T-cell (primary cell): ENCODE measurements at regions of chr1 and their contacts with region 1.

Region 1: DNA sequence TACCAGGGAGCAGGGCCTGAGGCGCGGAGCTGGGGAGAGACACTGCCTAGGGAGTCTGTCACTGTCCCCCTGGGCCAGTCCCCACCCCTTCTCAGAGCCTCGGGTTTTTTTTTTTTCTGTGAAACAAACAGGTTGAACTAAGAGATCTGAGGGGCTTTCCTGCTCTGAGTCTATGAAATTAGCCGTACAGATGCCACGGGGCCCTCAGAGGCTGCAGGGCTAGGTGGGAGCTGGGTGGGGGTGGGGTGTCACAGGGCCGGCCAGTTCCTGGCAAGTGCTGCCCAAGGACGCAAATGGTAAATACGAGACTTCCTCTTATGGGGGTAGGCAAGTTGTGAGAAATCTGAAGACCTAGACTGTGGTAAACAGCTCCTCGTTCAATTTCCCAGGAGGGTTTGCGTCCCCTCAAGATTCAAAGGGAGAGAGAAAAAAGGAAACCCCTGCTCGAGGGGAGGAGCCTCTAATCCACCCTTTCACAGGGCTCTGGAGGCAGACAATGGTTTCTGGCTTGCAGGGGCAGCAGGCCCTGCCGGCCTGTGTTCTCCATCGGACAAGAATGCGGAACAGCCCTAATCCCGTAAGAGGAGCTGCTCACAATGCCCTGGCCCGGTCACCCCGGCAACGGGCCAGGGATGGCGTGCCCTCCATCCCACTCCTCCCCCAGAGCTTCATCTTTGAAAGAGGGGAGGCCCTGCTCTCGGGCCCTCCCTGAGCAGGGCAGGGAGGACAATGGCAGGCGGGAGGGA is 7.8 kb downstream of the NUAK2 start:
- DNase-seq: peak in 34 of 35 experiments; percentile 7 to 75 (median 40)
- ATAC-seq: peak; percentile 62 to 87 (median 68)
- H3K4me3 ChIP-seq: peak overlapping the region; percentile 44 to 45
- H3K4me3 Mint-ChIP-seq: peak overlapping the region; percentile 82 to 95 (median 84)
- H3K27ac ChIP-seq: peak overlapping the region; percentile 66
- H3K27ac Mint-ChIP-seq: peak overlapping the region; percentile 95
- H3K4me1 ChIP-seq: peaks cover 54 to 90% of the 10 kb centered on the region in 2 experiments
- H3K4me1 Mint-ChIP-seq: peaks cover 92 to 97% (median 93%) of the 10 kb centered on the region in 3 donors
- H3K27me3 ChIP-seq: no peaks in the 10 kb centered on the region
- H3K27me3 Mint-ChIP-seq: no peaks in the 10 kb centered on the region

Region 2: GRCh38 chr1:205284343-205285144 is 29.2 kb before region 1 on chr1:
- CTCF ChIA-PET with region 1: interaction called, 3 to 51 read pairs
- POLR2A ChIA-PET with region 1: interaction called, 3 to 11 read pairs
- DNase-seq: peak; percentile 80 to 94 (median 88)
- ATAC-seq: peak; percentile 70 to 77 (median 76)
- H3K4me3 ChIP-seq: peak overlapping the region; percentile 34 to 60
- H3K4me3 Mint-ChIP-seq: peak overlapping the region; percentile 72 to 90 (median 78)
- H3K27ac ChIP-seq: peak overlapping the region; percentile 86
- H3K27ac Mint-ChIP-seq: peak overlapping the region; percentile 94 to 95
- H3K4me1 ChIP-seq: peaks cover 57 to 88% of the 10 kb centered on the region in 2 experiments
- H3K4me1 Mint-ChIP-seq: peaks cover 82 to 92% (median 87%) of the 10 kb centered on the region in 3 donors
- H3K27me3 ChIP-seq: no peaks in the 10 kb centered on the region
- H3K27me3 Mint-ChIP-seq: no peaks in the 10 kb centered on the region